ENCODE measurements at regions of chr1 and their contacts with region 1.

Region 1: DNA sequence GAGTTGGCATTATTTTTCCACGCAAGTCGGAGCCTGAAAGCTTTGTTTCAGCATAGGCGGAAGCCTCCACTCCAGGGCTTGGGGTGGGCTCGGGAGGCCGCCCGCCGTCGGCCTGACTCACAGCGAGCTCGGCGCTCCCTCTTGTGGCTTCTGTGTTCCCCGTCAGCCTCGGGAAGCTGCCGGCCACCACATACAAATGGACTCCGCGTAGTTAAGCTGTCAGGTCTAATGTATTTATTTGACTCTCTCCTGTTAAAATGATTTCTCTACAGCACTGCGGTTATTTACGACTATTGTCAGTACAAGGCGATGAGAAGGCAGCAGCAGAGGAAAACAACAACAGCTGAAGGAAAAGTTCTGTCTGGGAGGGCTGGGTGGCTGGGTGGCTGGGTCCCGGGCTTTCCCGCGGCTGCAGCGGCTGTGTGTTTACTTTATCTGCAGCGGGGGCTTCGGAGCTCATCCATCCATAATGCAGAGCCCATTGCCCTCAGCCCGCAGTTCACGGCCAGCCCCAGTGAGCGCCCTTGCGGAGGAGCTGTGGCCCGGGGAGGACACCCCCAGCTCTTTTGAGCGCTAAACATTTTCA is 375.7 kb upstream of the CAMK1G start:
- DNase-seq: peak; percentile 67 to 88 (median 83)
- ATAC-seq: peak; percentile 93 to 95
- H3K4me3 ChIP-seq: peak overlapping the region; percentile 46
- H3K27ac ChIP-seq: no peak overlapping the region
- H3K4me1 ChIP-seq: no peaks in the 10 kb centered on the region
- H3K27me3 ChIP-seq: no peaks in the 10 kb centered on the region

Region 2: DNA sequence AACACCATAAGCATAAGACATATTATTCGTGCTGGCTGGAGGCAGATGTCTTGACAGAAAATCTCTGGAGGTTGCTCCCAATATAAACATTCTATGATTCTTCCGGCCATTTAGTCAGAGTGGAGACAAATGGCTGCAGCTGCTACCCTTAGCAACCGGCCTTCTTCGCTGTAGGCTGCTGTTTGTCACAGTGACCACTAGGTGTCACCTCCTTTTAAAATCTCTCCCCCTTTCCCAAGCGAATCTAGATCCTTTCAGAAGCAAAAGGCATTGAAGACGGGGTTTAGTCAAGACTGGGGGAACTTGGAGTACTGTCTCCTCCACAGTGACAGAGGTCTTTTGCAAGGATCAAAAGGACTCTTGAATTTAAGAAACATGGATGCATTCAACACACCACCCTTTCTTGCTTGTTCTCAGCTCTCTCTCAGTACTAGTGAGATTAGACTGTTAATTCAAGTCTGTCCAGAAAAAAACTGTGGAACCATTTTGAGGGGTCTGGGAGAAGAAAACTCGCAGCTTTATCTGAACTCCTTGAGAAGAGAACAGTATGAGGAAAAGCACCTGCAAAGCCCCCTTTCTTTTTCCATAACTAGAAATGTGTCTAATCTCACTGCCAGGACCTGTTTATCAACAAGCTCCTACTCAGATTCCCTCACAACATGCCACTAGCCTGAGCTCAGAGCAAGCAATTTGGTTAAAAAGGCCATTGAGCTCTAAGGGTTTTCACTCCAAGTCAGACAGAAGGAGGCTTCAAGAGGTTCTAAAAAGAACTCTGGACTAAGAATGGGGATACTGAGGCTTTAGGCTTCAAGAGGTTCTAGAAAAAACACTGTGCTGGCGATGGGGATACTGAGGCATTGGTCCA is 555.3 kb before region 1 on chr1:
- intact Hi-C with region 1: loop called in 1 of 4 experiments (anchors 5 kb)
- DNase-seq: peak; percentile 20 to 63 (median 50)
- ATAC-seq: peak; percentile 79 to 80
- H3K4me3 ChIP-seq: no peak overlapping the region
- H3K27ac ChIP-seq: no peak overlapping the region
- H3K4me1 ChIP-seq: no peaks in the 10 kb centered on the region
- H3K27me3 ChIP-seq: no peaks in the 10 kb centered on the region

Region 3: GRCh38 chr1:208781391-208782045 is 426.3 kb before region 1 on chr1:
- intact Hi-C with region 1: no loop called
- DNase-seq: no peak
- ATAC-seq: no peak
- H3K4me3 ChIP-seq: no peak overlapping the region
- H3K27ac ChIP-seq: no peak overlapping the region
- H3K4me1 ChIP-seq: no peaks in the 10 kb centered on the region
- H3K27me3 ChIP-seq: no peaks in the 10 kb centered on the region

Region 4: GRCh38 chr1:209565759-209566678 is 358.2 kb after region 1 on chr1:
- intact Hi-C with region 1: loop called in 3 of 4 experiments (anchors 10 kb)
- DNase-seq: peak; percentile 72 to 86 (median 75)
- ATAC-seq: peak; percentile 83 to 88
- H3K4me3 ChIP-seq: no peak overlapping the region
- H3K27ac ChIP-seq: no peak overlapping the region
- H3K4me1 ChIP-seq: peaks cover 2% of the 10 kb centered on the region
- H3K27me3 ChIP-seq: no peaks in the 10 kb centered on the region

Measured in right cardiac atrium (tissue), 5 donors.